HEK293 (cell line): ENCODE measurements at regions of chr7 and their contacts with region 1.

Region 1: DNA sequence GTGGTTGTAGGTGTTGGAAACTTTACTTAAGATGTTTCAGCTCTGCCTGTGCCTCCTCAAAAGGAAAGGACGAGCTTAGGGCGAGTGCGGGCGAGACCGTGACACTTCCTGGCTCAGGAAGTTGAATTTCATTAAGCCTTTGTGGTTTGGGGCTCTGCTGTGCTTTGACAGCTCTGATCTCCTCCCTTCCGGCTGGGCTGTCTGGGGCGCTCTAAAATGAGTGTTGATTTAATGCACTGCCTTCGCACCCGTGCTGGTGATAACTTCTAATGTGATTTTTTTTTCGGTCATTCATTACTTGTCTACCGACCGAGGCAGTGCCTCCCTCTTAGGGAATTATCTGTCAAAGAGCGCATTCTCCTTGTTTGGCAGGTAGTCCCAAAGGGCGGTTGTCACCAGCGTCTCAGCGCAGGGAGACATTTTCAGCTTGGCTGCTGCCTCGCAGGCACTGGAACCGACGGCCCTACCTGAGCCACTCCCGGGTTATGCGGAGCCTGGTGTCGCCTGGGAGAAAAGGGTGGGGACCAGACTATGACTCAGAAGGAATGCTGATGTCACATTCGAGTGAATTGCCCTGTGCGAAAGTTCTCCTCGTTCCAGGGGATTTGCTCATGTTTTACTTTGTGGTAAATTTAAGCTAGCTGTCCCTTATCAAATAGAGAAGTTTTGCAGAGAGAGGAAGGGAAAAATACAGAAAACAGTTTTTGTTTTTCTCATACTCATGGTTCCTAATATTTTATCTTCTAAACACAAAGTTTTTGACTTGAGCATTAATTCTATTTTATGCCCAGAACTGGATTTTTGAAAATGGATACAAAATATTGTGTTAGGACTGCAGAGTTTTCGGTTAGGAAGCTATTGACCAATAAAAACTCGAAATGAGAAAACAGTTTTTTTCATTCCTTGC is 920 bp downstream of the TES start:
- H3K4me3 ChIP-seq: peak overlapping the region; percentile 79
- H3K27ac ChIP-seq: peak overlapping the region; percentile 95
- H3K4me1 ChIP-seq: peaks cover 7% of the 10 kb centered on the region
- CTCF ChIP-seq: no peak

Region 2: GRCh38 chr7:115634633-115635032 is 576.6 kb before region 1 on chr7:
- CTCF ChIA-PET with region 1: no interaction called
- POLR2A ChIA-PET with region 1: no interaction called
- H3K4me3 ChIP-seq: no peak overlapping the region
- H3K27ac ChIP-seq: no peak overlapping the region
- H3K4me1 ChIP-seq: peaks cover 16% of the 10 kb centered on the region
- CTCF ChIP-seq: no peak

Region 3: DNA sequence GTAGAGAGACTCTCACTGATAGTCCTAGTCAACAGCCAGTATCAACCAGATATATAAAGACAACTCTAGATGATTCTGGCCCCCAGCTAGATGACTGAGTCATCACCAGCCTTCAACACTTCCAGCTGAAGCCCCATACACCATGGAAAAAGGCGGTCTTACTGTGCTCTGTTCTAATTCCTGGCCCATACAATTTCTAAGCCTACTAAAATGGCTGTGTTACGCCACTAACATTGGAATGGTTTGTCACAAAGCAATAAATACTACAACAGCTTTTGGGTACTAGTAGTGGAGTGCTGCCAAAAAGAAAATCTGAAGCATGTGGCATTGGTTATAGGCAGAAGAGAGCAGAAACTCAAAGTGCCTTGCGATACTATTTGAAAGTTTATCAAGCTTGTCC is 13.9 kb before region 1 on chr7:
- CTCF ChIA-PET with region 1: interaction called, 5 read pairs
- POLR2A ChIA-PET with region 1: interaction called, 43 read pairs
- H3K4me3 ChIP-seq: no peak overlapping the region
- H3K27ac ChIP-seq: no peak overlapping the region
- H3K4me1 ChIP-seq: peaks cover 11% of the 10 kb centered on the region
- CTCF ChIP-seq: no peak

Region 4: DNA sequence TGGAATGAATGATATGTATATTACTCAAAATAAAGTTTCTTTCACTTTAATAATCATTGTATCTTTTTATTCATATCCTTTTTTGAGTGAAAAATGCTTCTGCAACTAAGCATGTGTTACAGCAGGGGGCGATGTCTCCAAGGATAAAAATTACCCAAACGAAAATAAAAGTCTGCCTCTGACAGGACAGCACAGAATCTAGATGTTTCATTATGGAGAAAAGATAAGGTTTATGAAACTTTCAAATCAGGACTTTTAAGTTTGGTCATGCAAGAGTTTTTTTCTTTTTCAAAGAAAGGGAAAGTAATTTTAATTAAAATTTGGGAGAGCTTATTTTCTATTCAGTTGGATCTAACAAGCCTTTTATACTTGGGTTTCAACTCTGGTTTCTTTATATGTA is 47.5 kb after region 1 on chr7:
- CTCF ChIA-PET with region 1: no interaction called
- POLR2A ChIA-PET with region 1: no interaction called
- H3K4me3 ChIP-seq: no peak overlapping the region
- H3K27ac ChIP-seq: no peak overlapping the region
- H3K4me1 ChIP-seq: no peaks in the 10 kb centered on the region
- CTCF ChIP-seq: 0 out of 2 replicates have a peak, but pooled peaks have one; percentile 44